ENCODE measurements at regions of chr7 and their contacts with region 1.

Region 1: GRCh38 chr7:50610521-50611277 is 45.5 kb upstream of the DDC start:
- DNase-seq: peak in 7 of 9 donors; percentile 12 to 54 (median 39)
- ATAC-seq: peak; percentile 83
- H3K4me3 ChIP-seq: no peak overlapping the region
- H3K4me3 Mint-ChIP-seq: peak overlapping the region in 7 of 10 donors; percentile 5 to 72 (median 31)
- H3K27ac ChIP-seq: no peak overlapping the region
- H3K27ac Mint-ChIP-seq: peak overlapping the region; percentile 7 to 88 (median 38)
- H3K4me1 ChIP-seq: peaks cover 14 to 41% of the 10 kb centered on the region in 2 donors
- H3K4me1 Mint-ChIP-seq: peaks cover 31 to 51% (median 36%) of the 10 kb centered on the region in 7 donors
- H3K27me3 ChIP-seq: no peaks in the 10 kb centered on the region
- H3K27me3 Mint-ChIP-seq: peaks cover 0 to 36% (median 0%) of the 10 kb centered on the region in 5 donors

Region 2: DNA sequence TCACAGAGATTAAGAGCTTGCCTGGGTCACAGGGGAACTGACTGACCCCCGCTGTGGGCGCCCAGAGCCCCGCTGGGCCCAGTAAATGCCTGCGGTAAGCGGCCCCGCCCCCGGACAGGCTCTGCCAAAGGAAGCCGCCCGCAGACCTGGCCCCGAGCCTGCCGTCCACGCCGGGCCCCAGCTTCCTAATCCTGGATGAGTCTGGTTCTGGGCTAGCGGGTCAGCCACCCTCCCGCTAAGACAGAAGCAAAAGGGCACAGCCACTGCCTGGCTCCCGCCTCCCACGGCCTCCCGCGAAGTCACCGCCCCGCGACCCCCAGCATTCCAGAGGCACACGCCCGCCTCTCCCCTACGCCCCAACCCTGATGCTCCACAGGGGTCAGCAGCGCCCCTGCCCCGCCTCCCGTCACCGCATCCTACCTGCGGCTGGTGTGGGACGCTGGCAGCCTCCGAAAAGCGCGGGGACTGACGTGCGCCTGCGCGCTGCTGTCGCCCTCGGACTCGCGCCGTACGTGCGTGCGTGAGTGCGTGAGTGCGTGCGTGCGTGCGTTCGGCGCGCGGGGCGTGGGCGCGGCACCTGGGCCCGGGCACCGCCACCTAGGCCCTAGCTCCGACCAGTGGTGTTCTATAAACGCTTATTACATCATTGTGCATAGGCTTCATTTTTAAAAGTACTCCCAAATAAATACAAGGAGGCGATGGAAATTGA is 160.7 kb before region 1 on chr7 and contains the start of gene FIGNL1:
- CTCF ChIA-PET with region 1: no interaction called
- POLR2A ChIA-PET with region 1: no interaction called
- intact Hi-C with region 1: loop called (anchors 5 kb)
- DNase-seq: peak; percentile 61 to 87 (median 84)
- ATAC-seq: peak; percentile 98
- H3K4me3 ChIP-seq: peak within 1 kb of the TSS; percentile 63
- H3K4me3 Mint-ChIP-seq: peak within 1 kb of the TSS; percentile 91 to 96 (median 94)
- H3K27ac ChIP-seq: peak within 1 kb of the TSS; percentile 94
- H3K27ac Mint-ChIP-seq: peak within 1 kb of the TSS; percentile 92 to 99 (median 96)
- H3K4me1 ChIP-seq: peaks cover 13 to 14% of the 10 kb centered on the region in 2 donors
- H3K4me1 Mint-ChIP-seq: peaks cover 14 to 43% (median 29%) of the 10 kb centered on the region in 7 donors
- H3K27me3 ChIP-seq: no peaks in the 10 kb centered on the region
- H3K27me3 Mint-ChIP-seq: peaks cover 0 to 11% (median 0%) of the 10 kb centered on the region in 5 donors
- total RNA-seq, gene FIGNL1: 7.7 to 30.2 (median 14.3) TPM

Region 3: DNA sequence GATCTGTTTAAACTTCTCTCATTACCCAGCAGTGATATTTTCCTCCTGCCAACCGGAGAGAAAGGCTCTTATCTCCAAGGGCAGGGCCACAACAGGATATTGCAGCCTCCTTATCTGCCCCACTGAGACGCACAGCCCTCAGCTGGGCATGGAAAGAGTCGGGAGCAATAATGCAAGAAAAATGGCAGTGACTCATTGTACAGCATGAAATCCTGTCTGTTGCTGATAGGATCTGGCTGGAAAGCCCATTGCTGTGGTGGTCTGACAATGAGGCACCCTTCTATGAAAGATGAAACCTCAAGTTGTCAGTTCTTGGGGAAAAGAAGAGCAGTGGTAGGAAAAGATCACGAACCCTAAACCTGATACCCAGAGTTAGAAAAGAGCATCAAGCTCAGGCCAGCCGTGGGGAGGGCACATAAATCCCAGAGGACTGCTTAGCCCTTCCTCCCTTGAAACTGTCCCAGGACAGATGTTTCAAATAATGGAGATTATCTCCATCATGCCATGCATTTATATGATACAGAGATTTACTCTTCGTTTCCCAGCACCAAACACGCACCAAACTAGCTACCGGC is 113.5 kb before region 1 on chr7:
- CTCF ChIA-PET with region 1: no interaction called
- POLR2A ChIA-PET with region 1: no interaction called
- intact Hi-C with region 1: no loop called
- DNase-seq: no peak
- ATAC-seq: peak; percentile 37
- H3K4me3 ChIP-seq: no peak overlapping the region
- H3K4me3 Mint-ChIP-seq: no peak overlapping the region
- H3K27ac ChIP-seq: no peak overlapping the region
- H3K27ac Mint-ChIP-seq: no peak overlapping the region
- H3K4me1 ChIP-seq: no peaks in the 10 kb centered on the region
- H3K4me1 Mint-ChIP-seq: no peaks in the 10 kb centered on the region
- H3K27me3 ChIP-seq: no peaks in the 10 kb centered on the region
- H3K27me3 Mint-ChIP-seq: peaks cover 5 to 39% (median 17%) of the 10 kb centered on the region in 5 donors

Region 4: GRCh38 chr7:50632561-50633413 is 22.1 kb after region 1 on chr7:
- CTCF ChIA-PET with region 1: interaction called, 4 read pairs
- POLR2A ChIA-PET with region 1: no interaction called
- intact Hi-C with region 1: loop called in 1 of 2 experiments (anchors 1 kb)
- DNase-seq: peak; percentile 27 to 64 (median 52)
- ATAC-seq: peak; percentile 88
- H3K4me3 ChIP-seq: no peak overlapping the region
- H3K4me3 Mint-ChIP-seq: no peak overlapping the region
- H3K27ac ChIP-seq: no peak overlapping the region
- H3K27ac Mint-ChIP-seq: peak overlapping the region in 1 of 9 donors; percentile 29
- H3K4me1 ChIP-seq: no peaks in the 10 kb centered on the region
- H3K4me1 Mint-ChIP-seq: peaks cover 0 to 6% (median 0%) of the 10 kb centered on the region in 7 donors
- H3K27me3 ChIP-seq: no peaks in the 10 kb centered on the region
- H3K27me3 Mint-ChIP-seq: peaks cover 0 to 37% (median 0%) of the 10 kb centered on the region in 5 donors

Region 5: GRCh38 chr7:50664461-50664922 is 53.8 kb after region 1 on chr7:
- CTCF ChIA-PET with region 1: no interaction called
- POLR2A ChIA-PET with region 1: interaction called, 9 read pairs
- intact Hi-C with region 1: loop called (anchors 2 to 5 kb)
- DNase-seq: no peak
- ATAC-seq: no peak
- H3K4me3 ChIP-seq: no peak overlapping the region
- H3K4me3 Mint-ChIP-seq: peak overlapping the region in 1 of 10 donors; percentile 12
- H3K27ac ChIP-seq: no peak overlapping the region
- H3K27ac Mint-ChIP-seq: no peak overlapping the region
- H3K4me1 ChIP-seq: peaks cover 29 to 54% of the 10 kb centered on the region in 2 donors
- H3K4me1 Mint-ChIP-seq: peaks cover 35 to 57% (median 41%) of the 10 kb centered on the region in 7 donors
- H3K27me3 ChIP-seq: no peaks in the 10 kb centered on the region
- H3K27me3 Mint-ChIP-seq: no peaks in the 10 kb centered on the region

Region 6: GRCh38 chr7:50679218-50680007 is 68.7 kb after region 1 on chr7:
- CTCF ChIA-PET with region 1: no interaction called
- POLR2A ChIA-PET with region 1: no interaction called
- intact Hi-C with region 1: loop called (anchors 1 to 5 kb)
- DNase-seq: peak in 6 of 9 donors; percentile 27 to 59 (median 54)
- ATAC-seq: peak; percentile 73
- H3K4me3 ChIP-seq: no peak overlapping the region
- H3K4me3 Mint-ChIP-seq: no peak overlapping the region
- H3K27ac ChIP-seq: no peak overlapping the region
- H3K27ac Mint-ChIP-seq: no peak overlapping the region
- H3K4me1 ChIP-seq: no peaks in the 10 kb centered on the region
- H3K4me1 Mint-ChIP-seq: peaks cover 0 to 5% (median 0%) of the 10 kb centered on the region in 7 donors
- H3K27me3 ChIP-seq: no peaks in the 10 kb centered on the region
- H3K27me3 Mint-ChIP-seq: peaks cover 0 to 22% (median 0%) of the 10 kb centered on the region in 5 donors

Region 7: DNA sequence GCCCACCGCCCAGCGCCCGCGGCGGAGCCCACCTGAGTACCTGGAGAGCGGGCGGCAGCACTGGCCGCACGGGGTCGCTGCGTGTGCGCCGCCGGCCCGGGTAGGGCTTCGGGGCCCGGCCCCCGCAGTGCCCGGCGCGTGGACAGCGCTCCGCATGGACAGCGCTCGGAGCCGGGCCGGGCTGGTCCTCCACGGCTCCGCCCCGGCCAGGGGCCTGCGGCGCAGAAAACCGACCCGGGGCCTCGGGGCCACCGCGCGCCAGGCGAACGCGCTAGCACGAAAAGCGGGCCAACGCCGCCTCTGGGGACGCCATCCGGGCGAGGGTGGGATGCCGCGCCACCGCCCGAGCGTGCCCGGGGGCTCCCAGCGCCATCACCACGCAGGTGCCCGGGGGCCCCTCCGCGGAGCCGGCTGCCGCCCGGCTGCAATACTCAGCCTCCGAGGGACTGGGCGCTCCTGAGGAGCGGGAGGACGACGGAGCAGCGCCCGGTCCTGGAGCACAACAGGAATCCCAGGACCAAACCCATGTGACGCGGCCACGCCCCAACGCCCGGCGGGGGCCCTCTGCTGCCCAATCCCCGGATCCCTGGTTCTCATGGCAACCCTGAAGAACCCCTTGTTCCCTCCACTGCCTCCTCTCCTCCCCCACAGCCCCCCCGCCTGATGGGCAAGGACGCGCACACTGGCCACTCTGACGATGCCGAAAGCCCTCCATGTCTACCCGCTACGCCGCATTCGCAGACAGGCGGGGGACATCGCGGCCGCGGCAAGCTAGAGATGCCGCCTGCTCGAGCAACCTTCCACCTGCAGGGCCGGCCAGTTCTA is 171.9 kb after region 1 on chr7 and contains the start of gene GRB10:
- CTCF ChIA-PET with region 1: no interaction called
- POLR2A ChIA-PET with region 1: no interaction called
- intact Hi-C with region 1: loop called in 1 of 2 experiments (anchors 5 kb)
- DNase-seq: peak in 3 of 9 donors; percentile 13 to 18 (median 16)
- ATAC-seq: peak; percentile 61
- H3K4me3 ChIP-seq: peak within 1 kb of the TSS; percentile 48
- H3K4me3 Mint-ChIP-seq: peak within 1 kb of the TSS; percentile 65 to 89 (median 84)
- H3K27ac ChIP-seq: no peak within 1 kb of the TSS
- H3K27ac Mint-ChIP-seq: peak within 1 kb of the TSS in 8 of 9 donors; percentile 67 to 95 (median 82)
- H3K4me1 ChIP-seq: peaks cover 0 to 9% of the 10 kb centered on the region in 2 donors
- H3K4me1 Mint-ChIP-seq: peaks cover 6 to 41% (median 26%) of the 10 kb centered on the region in 7 donors
- H3K27me3 ChIP-seq: no peaks in the 10 kb centered on the region
- H3K27me3 Mint-ChIP-seq: peaks cover 15 to 51% (median 24%) of the 10 kb centered on the region in 5 donors
- total RNA-seq, gene GRB10: 3.4 to 10.6 (median 7.2) TPM

Measured in naive thymus-derived CD4-positive, alpha-beta T cell (primary cell).